ENCODE measurements at regions of chr5 and their contacts with region 1.

Region 1: DNA sequence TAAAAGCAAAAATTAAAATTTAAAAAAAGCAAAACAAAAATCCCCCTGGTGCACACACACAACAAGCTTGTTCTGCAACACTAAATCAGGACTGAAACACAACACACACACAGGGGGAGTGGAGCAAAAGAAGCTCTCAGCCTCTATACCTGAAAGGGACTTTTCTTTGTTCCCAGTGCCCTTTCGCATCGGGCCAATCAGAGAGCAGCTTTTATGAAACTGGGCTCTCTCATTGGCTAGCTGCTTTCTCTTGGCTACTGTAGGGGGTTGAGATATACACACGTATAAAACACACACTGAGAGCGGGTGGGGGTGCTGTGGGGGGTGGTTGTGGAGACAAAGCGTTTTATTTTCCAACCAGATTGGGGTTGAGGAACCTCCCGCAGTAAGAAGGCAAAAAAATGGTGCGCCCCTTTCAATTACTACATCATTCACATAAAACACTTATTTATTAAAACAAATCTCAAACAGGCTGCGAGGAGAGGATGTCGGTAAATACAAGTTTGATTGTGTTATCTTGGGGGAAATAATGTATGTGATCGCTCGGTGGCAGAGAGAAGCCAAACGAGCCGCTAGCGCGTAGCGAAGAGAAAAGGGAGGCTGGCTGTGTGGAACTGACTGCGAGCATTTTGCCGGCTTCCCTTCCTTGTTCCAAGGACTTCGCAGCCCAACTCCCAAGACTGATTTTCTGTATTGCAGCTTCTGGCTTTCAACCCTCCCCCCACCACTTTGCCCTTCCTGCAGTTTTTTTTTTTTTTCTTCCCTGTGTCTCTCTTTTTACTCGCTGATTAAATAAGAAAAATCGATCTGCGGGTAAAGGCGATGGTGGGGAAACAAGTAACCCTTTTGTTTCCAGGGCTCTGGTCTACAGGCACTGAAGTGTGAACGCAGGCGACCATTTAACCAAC is 2.5 kb upstream of the ZNF608 start:
- DNase-seq: peak in 4 of 5 donors; percentile 74 to 82 (median 80)
- ATAC-seq: peak; percentile 88 to 94 (median 92)
- H3K4me3 ChIP-seq: peak overlapping the region; percentile 46 to 77 (median 68)
- H3K27ac ChIP-seq: peak overlapping the region; percentile 56 to 96 (median 91)
- H3K4me1 ChIP-seq: peaks cover 0 to 36% (median 6%) of the 10 kb centered on the region in 12 donors
- H3K27me3 ChIP-seq: peaks cover 0 to 21% (median 0%) of the 10 kb centered on the region in 9 donors
- CTCF ChIP-seq: no peak
- POLR2A ChIP-seq: peak in 1 of 2 donors; percentile 56

Region 2: GRCh38 chr5:123671042-123671441 is 1077.9 kb before region 1 on chr5:
- intact Hi-C with region 1: loop called in 1 of 10 experiments (anchors 10 kb)
- DNase-seq: peak in 4 of 5 donors; percentile 28 to 37 (median 31)
- ATAC-seq: peak in 1 of 4 donors; percentile 25
- H3K4me3 ChIP-seq: no peak overlapping the region
- H3K27ac ChIP-seq: no peak overlapping the region
- H3K4me1 ChIP-seq: peaks cover 0 to 26% (median 11%) of the 10 kb centered on the region in 12 donors
- H3K27me3 ChIP-seq: no peaks in the 10 kb centered on the region
- CTCF ChIP-seq: peak; percentile 73 to 93 (median 83)
- POLR2A ChIP-seq: no peak

Region 3: DNA sequence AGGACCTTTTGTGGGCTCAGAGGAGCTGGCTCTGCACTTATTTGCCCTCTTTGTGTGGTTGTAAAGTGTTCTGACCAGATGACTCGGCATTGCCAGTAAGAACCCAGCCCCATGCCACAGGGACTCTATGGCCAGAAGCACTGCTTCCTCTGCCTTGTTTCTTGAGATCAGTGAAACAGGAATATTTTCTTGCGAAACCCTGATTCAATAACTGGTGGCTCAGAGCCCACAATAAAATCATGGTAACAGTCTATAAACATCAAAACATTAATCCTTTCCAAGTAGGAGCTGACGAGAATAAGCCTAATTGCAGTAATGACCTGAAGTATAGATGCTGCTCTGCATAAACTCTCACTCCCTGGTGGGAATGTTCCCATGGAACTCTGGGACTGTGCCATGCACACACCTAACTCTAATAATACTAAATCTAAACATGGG is 346.8 kb before region 1 on chr5:
- intact Hi-C with region 1: loop called in 1 of 10 experiments (anchors 10 kb)
- DNase-seq: peak in 2 of 5 donors; percentile 40 to 45
- ATAC-seq: peak in 3 of 4 donors; percentile 36 to 88 (median 75)
- H3K4me3 ChIP-seq: no peak overlapping the region
- H3K27ac ChIP-seq: peak overlapping the region in 2 of 12 donors; percentile 15 to 56
- H3K4me1 ChIP-seq: peaks cover 0 to 32% (median 5%) of the 10 kb centered on the region in 12 donors
- H3K27me3 ChIP-seq: no peaks in the 10 kb centered on the region
- CTCF ChIP-seq: no peak
- POLR2A ChIP-seq: no peak

Region 4: GRCh38 chr5:124655922-124656511 is 92.9 kb before region 1 on chr5:
- intact Hi-C with region 1: loop called (anchors 1 to 5 kb)
- DNase-seq: no peak
- ATAC-seq: peak; percentile 56 to 88 (median 71)
- H3K4me3 ChIP-seq: peak overlapping the region in 7 of 12 donors; percentile 2 to 32 (median 9)
- H3K27ac ChIP-seq: peak overlapping the region in 11 of 12 donors; percentile 1 to 75 (median 62)
- H3K4me1 ChIP-seq: peaks cover 0 to 84% (median 57%) of the 10 kb centered on the region in 12 donors
- H3K27me3 ChIP-seq: peaks cover 0 to 62% (median 0%) of the 10 kb centered on the region in 9 donors
- CTCF ChIP-seq: no peak
- POLR2A ChIP-seq: no peak

Region 5: GRCh38 chr5:124948062-124948753 is 199.3 kb after region 1 on chr5:
- intact Hi-C with region 1: loop called in 1 of 10 experiments (anchors 2 kb)
- DNase-seq: peak in 4 of 5 donors; percentile 45 to 71 (median 66)
- ATAC-seq: peak in 2 of 4 donors; percentile 36 to 76
- H3K4me3 ChIP-seq: no peak overlapping the region
- H3K27ac ChIP-seq: peak overlapping the region in 2 of 12 donors; percentile 26 to 58
- H3K4me1 ChIP-seq: peaks cover 0 to 11% (median 6%) of the 10 kb centered on the region in 12 donors
- H3K27me3 ChIP-seq: no peaks in the 10 kb centered on the region
- CTCF ChIP-seq: no peak
- POLR2A ChIP-seq: no peak

Region 6: GRCh38 chr5:125835293-125836172 is 1086.6 kb after region 1 on chr5:
- intact Hi-C with region 1: loop called in 1 of 10 experiments (anchors 5 kb)
- DNase-seq: peak in 4 of 5 donors; percentile 16 to 38 (median 30)
- ATAC-seq: peak in 3 of 4 donors; percentile 74 to 86 (median 77)
- H3K4me3 ChIP-seq: peak overlapping the region in 4 of 12 donors; percentile 10 to 20 (median 16)
- H3K27ac ChIP-seq: no peak overlapping the region
- H3K4me1 ChIP-seq: peaks cover 0 to 8% (median 4%) of the 10 kb centered on the region in 12 donors
- H3K27me3 ChIP-seq: no peaks in the 10 kb centered on the region
- CTCF ChIP-seq: peak; percentile 42 to 84 (median 70)
- POLR2A ChIP-seq: no peak